ENCODE measurements at regions of chr1 and their contacts with region 1.

Region 1: GRCh38 chr1:1374929-1375662 is at the start of gene AURKAIP1:
- DNase-seq: peak; percentile 97 to 98
- H3K4me3 ChIP-seq: peak within 1 kb of the TSS; percentile 84
- H3K4me3 Mint-ChIP-seq: peak within 1 kb of the TSS; percentile 85
- H3K27ac Mint-ChIP-seq: peak within 1 kb of the TSS; percentile 93
- H3K4me1 ChIP-seq: peaks cover 6% of the 10 kb centered on the region
- H3K4me1 Mint-ChIP-seq: no peaks in the 10 kb centered on the region
- H3K27me3 ChIP-seq: no peaks in the 10 kb centered on the region
- H3K27me3 Mint-ChIP-seq: no peaks in the 10 kb centered on the region
- CTCF ChIP-seq: peak in 1 of 2 experiments; percentile 39
- total RNA-seq, gene AURKAIP1: 187 and 200 TPM in 2 replicates

Region 2: DNA sequence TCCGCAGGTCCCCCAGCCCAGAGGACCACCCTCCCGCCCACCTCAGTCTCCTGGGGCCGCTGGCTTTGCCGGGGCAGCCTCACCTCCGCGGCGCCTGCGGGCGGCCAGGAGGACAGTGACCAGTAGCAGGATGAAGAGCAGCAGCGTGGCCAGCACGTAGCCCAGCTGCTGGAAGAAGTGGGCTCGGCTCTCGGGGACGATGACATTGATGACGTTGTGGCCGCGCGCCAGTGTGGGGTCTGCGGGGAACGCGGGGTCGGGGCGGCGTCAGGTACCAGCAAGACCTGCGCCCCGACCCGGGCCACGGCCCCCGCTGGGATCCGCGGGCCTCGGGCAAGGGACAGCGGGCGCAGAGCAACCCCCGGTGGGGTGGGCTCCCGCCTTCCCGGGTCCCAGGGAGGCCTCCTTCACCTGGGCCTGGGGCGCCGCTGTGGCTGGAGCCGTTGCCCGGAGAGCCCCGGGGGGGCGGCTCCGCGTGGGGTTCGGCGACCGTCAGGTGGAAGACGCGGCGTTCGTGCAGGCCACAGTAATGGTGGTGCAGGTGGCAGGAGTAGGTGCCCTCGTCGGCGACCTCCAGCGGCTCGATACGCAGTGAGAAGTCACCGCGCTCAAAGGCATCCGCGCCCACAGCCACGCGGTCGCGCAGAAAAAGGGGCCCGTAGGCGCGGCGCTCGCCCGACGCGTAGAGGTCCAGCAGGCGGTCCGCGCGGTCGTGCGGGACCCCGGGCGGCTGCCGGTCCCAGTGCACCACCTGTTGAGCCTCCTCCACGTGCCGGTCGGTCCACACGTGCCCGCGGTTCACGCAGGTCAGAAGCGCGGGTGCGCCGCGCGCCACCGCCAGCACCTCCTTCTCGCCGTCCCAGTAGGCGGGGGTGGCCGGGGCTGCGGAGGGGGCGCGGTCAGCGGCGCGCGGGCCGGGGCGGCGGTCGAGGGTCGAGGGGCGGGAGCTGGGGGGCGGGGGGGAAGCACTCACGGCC is 20.5 kb before region 1 on chr1:
- CTCF ChIA-PET with region 1: interaction called, 10 read pairs
- POLR2A ChIA-PET with region 1: interaction called, 4 read pairs
- intact Hi-C with region 1: no loop called
- DNase-seq: no peak
- H3K4me3 ChIP-seq: peak overlapping the region; percentile 47
- H3K4me3 Mint-ChIP-seq: peak overlapping the region; percentile 66
- H3K27ac Mint-ChIP-seq: no peak overlapping the region
- H3K4me1 ChIP-seq: peaks cover 17% of the 10 kb centered on the region
- H3K4me1 Mint-ChIP-seq: no peaks in the 10 kb centered on the region
- H3K27me3 ChIP-seq: no peaks in the 10 kb centered on the region
- H3K27me3 Mint-ChIP-seq: no peaks in the 10 kb centered on the region
- CTCF ChIP-seq: no peak

Measured in Caco-2 (cell line).